Sciatic nerve (tissue), 2 donors: ENCODE measurements at regions of chr3 and their contacts with region 1.

Region 1: DNA sequence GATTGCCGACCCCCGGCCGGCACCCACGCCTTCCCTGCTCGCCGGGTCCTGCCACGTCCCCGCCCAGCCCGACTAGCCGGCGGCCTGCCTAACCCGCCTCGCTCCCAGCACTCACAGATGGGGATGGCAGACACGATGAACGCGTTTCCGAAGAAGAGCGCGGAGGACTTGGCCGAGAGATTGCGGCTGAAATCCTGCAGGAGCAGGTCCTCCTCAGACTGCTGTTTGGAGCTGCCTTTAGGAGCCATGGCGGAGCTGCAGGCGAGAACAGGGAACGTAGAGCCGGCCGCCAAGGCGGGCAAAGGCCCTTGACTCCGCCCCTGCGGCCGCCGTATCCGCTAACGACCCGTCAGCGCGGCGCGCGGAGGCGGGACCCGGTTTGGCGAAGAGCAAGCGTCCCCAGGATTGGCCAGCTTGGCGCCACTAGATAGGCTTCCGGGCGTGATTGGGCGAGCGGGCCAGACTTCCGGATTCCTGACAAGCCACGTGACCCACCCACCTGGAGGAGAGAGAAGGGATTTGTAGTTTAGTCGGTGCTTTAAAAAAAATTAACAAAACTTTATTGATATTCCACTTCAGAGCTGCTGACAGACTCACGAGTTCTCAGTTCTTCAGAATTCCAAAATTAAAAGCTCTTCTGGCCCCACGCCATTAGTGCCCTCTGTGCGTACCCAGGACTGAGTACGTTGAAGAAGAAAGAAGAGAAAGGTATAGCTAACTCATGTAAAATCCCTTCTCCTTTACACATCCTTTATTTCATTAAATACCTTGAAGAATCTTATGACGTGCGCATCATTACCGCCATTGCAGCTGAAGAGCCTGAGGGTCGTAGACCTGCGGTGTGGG is at the start of gene SSR3:
- DNase-seq: peak; percentile 100
- ATAC-seq: peak; percentile 100
- total RNA-seq, gene SSR3: 125 TPM

Region 2: DNA sequence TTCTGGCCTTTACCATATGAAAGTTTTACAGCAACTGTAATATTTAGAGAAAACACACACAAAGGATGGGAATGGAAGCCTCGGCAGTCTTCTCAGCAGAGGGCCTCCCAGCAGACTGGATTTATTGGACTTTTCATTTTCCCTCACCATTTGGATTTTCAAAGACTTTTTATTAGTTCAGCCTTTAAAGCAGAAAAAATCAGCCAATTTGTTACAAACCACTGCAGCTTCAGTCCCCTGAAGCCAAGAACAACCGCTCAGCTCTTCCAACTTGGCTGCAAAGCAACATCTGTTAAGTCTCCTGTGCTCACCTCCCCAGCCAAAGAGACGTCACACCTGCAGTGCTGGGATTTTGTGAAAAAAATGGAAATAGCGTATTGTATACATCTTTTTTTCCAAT is 563.9 kb before region 1 on chr3:
- intact Hi-C with region 1: no loop called
- DNase-seq: no peak
- ATAC-seq: peak; percentile 62

Region 3: DNA sequence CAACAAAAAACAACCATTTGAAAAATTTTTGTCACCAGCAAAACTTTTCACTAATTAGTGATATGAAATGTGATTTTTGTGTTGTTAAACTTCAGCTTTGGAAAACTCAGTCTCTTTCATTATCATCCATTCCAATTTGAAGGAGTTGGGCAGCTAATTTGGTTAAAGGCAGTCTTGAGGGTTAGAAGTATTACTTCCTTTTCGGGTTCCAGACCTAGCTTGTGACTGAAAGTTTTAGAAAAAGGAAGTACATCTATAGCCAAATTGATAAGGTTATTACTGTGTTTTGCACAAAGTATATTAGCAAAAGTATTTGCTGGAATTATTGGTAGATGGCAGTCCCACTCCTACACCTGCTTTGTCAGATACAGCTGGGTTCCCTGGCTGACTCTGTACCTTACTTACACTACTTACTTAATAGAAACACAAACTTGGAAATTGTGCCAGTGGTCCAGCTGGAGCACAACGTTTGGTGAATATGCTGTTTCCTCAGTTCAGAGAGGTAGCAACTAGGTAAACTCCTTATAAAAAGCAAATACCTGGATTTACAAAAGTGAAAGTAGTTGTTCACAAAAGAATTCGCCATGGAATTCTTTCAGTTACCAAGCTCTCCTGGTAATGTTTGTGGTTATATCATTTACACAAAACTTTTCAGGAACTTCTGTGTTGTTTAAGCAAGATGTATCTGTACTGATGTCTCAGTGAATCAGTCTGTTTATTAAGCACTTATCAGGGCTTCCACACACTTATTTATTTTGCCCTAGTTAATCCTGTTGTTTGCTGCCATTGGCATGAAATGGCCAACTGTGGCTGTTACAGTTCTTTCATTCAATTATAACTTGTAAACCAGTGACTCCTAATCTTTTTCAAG is 150.9 kb after region 1 on chr3:
- intact Hi-C with region 1: no loop called
- DNase-seq: no peak
- ATAC-seq: no peak

Region 4: DNA sequence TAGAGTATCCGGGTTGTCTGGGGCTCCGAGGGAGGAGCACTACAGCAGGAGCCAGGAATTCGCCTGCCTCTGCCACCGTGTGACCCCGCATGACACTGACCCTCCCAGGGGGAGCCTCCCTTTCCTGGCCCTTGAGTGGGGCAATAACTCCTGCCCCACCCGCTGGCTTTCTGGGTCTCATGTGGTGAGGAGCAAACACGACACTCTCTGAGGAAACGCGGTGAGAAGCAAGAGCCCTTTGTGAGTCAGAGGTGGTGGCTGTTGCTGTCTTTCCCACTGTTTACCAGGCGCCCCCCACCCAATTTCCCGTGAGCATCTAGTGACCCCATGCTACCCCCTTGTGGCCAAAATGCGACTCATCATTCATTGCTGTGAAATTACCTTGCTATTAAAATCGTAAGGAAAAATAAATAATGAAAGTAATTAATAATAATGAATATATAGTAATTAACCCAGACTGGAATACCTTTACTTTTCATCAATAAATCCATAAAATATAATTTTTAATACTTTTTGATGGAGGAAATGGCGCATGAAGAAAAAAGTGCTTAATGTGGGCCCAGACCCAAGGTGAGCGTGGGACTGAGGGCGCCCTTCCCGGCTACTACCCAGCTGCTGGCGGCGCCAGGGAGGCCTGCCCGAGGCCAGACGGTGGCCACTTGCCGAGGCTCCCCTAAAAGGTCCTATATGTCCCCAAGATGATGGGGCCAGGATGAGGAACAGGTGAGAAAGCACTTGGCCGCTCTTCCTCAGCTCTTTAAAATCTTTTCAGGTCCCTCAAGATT is 575.6 kb after region 1 on chr3:
- intact Hi-C with region 1: loop called (anchors 10 kb)
- DNase-seq: peak; percentile 77
- ATAC-seq: peak; percentile 55